ENCODE measurements at regions of chr2 and their contacts with region 1.

Region 1: DNA sequence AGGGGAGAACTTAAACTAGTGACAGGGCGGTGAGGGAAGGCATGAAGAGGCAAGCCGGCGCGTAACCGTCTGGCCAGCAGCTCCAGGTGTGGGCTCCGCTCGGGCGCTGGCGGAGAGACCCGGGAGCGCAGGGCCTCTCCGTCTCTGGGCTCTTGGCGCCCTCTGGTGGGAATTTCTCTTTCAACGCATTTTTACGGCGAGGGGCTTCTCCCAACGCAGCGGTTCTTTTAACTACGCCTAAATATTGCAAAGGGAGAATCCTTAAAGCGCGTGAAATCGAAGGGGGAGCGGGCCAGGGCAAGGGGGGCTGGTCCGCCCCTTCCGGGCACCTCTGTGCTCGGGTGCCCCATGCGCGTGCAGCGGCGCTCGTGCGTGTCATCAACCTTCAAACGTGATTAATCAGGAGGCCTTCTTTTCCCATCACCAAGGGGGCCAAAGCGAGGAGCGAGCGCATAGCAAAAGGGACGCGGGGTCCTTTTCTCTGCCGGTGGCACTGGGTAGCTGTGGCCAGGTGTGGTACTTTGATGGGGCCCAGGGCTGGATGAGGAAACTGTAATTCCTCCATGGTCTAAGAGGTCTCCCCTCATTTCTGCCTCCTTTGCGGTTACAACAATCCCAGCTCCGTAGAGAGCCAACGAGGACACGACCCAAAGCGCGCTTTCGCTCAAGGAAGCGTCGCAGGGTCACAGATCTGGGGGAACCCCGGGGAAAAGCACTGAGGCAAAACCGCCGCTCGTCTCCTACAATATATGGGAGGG is 762 bp upstream of the GAD1 start:
- DNase-seq: peak; percentile 80
- ATAC-seq: peak; percentile 49
- H3K4me3 Mint-ChIP-seq: peak overlapping the region; percentile 66
- H3K27ac Mint-ChIP-seq: peak overlapping the region; percentile 42
- H3K4me1 Mint-ChIP-seq: peaks cover 45% of the 10 kb centered on the region
- H3K27me3 Mint-ChIP-seq: peaks cover 70% of the 10 kb centered on the region
- CTCF ChIP-seq: peak; percentile 94

Region 2: GRCh38 chr2:170324640-170325046 is 491.3 kb before region 1 on chr2:
- CTCF ChIA-PET with region 1: interaction called, 50 read pairs
- POLR2A ChIA-PET with region 1: no interaction called
- intact Hi-C with region 1: loop called (anchors 5 kb)
- DNase-seq: peak; percentile 39
- ATAC-seq: peak; percentile 72
- H3K4me3 Mint-ChIP-seq: no peak overlapping the region
- H3K27ac Mint-ChIP-seq: no peak overlapping the region
- H3K4me1 Mint-ChIP-seq: no peaks in the 10 kb centered on the region
- H3K27me3 Mint-ChIP-seq: peaks cover 2% of the 10 kb centered on the region
- CTCF ChIP-seq: peak; percentile 62

Region 3: DNA sequence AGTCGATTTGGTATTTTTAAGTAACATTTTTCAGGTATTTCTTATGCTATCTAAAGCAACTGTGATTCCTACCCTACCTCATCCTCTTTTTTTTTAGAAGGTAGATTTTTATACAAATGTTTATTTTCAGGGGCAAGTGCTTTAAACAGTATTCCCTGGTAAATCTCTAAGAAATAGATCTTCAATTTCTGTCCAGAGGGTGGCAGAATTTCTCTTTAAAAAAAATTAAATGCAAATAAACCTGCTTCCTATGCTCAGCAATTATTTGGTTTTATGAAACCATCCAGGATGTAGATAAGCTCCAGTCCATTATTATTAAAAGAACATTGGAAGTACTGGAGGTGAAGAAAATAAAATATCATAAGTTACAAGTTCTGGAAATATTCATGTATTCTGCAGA is 446.0 kb before region 1 on chr2:
- CTCF ChIA-PET with region 1: interaction called, 77 read pairs
- POLR2A ChIA-PET with region 1: no interaction called
- intact Hi-C with region 1: no loop called
- DNase-seq: no peak
- ATAC-seq: no peak
- H3K4me3 Mint-ChIP-seq: no peak overlapping the region
- H3K27ac Mint-ChIP-seq: no peak overlapping the region
- H3K4me1 Mint-ChIP-seq: peaks cover 37% of the 10 kb centered on the region
- H3K27me3 Mint-ChIP-seq: peaks cover 38% of the 10 kb centered on the region
- CTCF ChIP-seq: peak; percentile 56

Region 4: DNA sequence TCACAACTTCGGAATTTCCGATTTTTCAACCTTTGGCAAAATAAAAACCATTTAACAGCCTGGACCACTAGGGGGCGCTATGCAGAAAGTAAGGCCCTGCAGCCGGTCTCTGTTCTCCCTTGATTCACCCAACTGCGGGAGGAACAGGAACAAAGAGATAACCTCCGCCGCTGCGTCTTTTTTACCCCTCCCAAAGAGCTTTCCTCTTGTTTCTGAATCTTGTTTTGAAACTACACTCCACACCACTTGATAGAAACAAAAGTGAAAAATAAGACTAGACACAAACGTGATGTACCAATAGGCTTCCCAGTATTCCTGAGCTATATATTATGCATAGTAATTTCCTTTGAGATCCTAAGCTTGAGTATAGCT is 406.8 kb before region 1 on chr2:
- CTCF ChIA-PET with region 1: interaction called, 73 read pairs
- POLR2A ChIA-PET with region 1: no interaction called
- intact Hi-C with region 1: loop called (anchors 2 kb)
- DNase-seq: peak; percentile 87
- ATAC-seq: peak; percentile 75
- H3K4me3 Mint-ChIP-seq: peak overlapping the region; percentile 39
- H3K27ac Mint-ChIP-seq: no peak overlapping the region
- H3K4me1 Mint-ChIP-seq: peaks cover 4% of the 10 kb centered on the region
- H3K27me3 Mint-ChIP-seq: peaks cover 20% of the 10 kb centered on the region
- CTCF ChIP-seq: peak; percentile 90

Region 5: DNA sequence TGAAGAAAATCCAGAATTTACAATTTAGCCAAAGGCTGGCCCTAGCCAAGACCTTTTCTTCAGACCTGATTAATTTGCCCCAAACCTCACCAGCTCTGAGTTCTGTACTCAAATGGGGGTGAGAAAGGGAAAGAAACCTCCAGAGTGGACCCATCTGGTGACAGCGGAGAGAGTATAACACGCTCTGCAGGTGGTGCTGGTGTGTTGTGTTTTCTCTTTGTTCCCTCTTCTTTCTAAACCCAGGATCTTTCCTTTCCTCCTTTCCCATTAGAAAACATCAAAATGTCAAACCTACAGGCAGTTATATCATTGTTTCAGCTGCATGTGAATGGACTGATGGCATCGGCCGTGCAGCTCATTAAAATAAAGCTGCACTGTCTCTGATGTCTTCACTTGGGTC is 354.0 kb before region 1 on chr2:
- CTCF ChIA-PET with region 1: no interaction called
- POLR2A ChIA-PET with region 1: no interaction called
- intact Hi-C with region 1: no loop called
- DNase-seq: no peak
- ATAC-seq: no peak
- H3K4me3 Mint-ChIP-seq: no peak overlapping the region
- H3K27ac Mint-ChIP-seq: no peak overlapping the region
- H3K4me1 Mint-ChIP-seq: no peaks in the 10 kb centered on the region
- H3K27me3 Mint-ChIP-seq: peaks cover 1% of the 10 kb centered on the region
- CTCF ChIP-seq: no peak

Region 6: GRCh38 chr2:170660409-170660808 is 155.5 kb before region 1 on chr2:
- CTCF ChIA-PET with region 1: no interaction called
- POLR2A ChIA-PET with region 1: no interaction called
- intact Hi-C with region 1: no loop called
- DNase-seq: no peak
- ATAC-seq: no peak
- H3K4me3 Mint-ChIP-seq: no peak overlapping the region
- H3K27ac Mint-ChIP-seq: no peak overlapping the region
- H3K4me1 Mint-ChIP-seq: no peaks in the 10 kb centered on the region
- H3K27me3 Mint-ChIP-seq: peaks cover 3% of the 10 kb centered on the region
- CTCF ChIP-seq: no peak

Region 7: DNA sequence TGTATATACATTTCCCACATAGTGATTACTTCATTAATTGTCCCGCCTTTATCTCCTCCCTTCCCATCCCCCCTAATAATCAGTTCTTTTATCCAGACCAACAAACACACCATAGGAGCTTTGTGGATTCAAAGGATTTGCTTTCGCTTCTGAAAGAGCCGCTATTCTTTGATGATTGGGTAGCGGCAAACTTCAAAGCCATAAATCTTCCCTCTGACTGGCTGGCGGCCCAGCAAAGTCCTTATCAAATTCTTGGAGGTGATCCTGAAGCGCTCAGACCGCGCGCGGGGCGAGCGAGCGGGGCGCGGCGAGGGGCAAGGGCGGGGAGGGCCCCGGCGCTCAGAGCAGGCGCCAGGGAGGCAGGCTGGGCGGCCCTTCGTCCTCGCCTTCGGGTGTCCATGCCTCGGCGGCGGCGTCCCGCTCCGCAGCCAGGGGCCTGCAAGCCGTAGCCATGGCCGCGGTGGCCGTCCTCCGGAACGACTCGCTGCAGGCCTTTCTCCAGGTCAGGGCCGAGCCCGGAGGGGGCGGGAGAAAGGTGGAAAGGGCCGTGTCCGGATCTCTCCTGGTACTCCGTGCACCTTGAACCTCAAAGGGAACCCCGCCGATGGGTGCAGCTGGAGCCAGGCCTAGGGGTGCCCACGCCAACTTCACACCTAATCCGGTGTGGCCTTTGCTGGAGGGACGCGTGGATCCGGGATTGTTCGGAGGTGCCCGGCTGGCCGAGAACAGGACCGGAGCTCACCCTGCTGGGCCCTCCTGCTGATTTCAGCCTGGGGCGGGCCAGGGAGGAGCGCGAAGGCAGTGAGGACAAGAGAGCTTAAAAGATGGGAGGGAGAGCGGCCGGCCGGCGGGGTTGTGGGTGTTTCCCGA is 100.6 kb before region 1 on chr2 and contains the start of gene SP5:
- CTCF ChIA-PET with region 1: interaction called, 22 read pairs
- POLR2A ChIA-PET with region 1: no interaction called
- intact Hi-C with region 1: loop called (anchors 2 kb)
- DNase-seq: peak; percentile 41
- ATAC-seq: no peak
- H3K4me3 Mint-ChIP-seq: peak within 1 kb of the TSS; percentile 72
- H3K27ac Mint-ChIP-seq: no peak within 1 kb of the TSS
- H3K4me1 Mint-ChIP-seq: peaks cover 33% of the 10 kb centered on the region
- H3K27me3 Mint-ChIP-seq: peaks cover 72% of the 10 kb centered on the region
- CTCF ChIP-seq: no peak
- total RNA-seq, gene SP5: not detected

Region 8: GRCh38 chr2:170778900-170779299 is 37.0 kb before region 1 on chr2:
- CTCF ChIA-PET with region 1: interaction called, 10 read pairs
- POLR2A ChIA-PET with region 1: no interaction called
- intact Hi-C with region 1: no loop called
- DNase-seq: no peak
- ATAC-seq: no peak
- H3K4me3 Mint-ChIP-seq: no peak overlapping the region
- H3K27ac Mint-ChIP-seq: no peak overlapping the region
- H3K4me1 Mint-ChIP-seq: no peaks in the 10 kb centered on the region
- H3K27me3 Mint-ChIP-seq: peaks cover 16% of the 10 kb centered on the region
- CTCF ChIP-seq: no peak

Measured in activated CD8-positive, alpha-beta T cell treated with anti-CD3 and anti-CD28 coated beads for 36 hours (primary cell).